RWPE1 (cell line): ENCODE measurements at regions of chr9 and their contacts with region 1.

Region 1: GRCh38 chr9:113410207-113410864 is at the starts of genes C9orf43 and POLE3:
- DNase-seq: peak; percentile 99
- H3K27ac ChIP-seq: peak within 1 kb of the TSS; percentile 95
- CTCF ChIP-seq: no peak

Region 2: DNA sequence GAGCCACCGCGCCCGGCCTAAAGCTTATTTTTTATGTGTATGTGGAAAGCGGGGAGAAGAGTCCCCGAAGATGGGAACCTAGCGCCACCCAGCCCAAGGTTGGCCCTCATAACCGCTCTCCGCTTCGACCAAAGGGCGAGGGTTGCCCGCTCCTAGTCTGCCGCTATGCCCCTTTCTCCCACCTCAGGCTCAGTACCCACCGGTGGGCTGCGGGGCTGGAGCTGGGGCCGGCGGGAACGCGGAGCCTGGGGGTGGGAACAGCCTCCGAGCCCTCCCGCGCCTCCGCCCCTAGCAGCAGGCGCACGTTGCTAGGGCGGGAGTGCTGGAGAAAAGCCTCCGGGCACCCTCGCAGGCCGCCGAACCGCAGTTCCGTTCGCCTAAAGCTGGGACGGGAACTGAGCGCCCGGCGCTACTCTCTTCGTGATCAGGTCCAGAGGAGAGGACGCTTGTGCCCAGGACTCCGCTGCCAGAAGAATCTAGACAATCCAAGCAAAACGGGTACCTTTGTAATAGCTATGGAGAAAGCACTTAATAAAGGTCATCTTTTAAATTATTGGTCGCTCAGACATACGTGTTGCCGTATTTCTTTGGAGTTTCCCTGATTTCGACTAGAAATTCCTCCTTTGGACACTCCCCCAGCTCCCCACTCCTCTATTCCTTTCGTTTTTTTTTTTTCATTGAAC is 70.2 kb before region 1 on chr9 and contains the start of gene WDR31:
- CTCF ChIA-PET with region 1: interaction called, 3 read pairs
- POLR2A ChIA-PET with region 1: interaction called, 11 read pairs
- DNase-seq: peak; percentile 97
- H3K27ac ChIP-seq: peak within 1 kb of the TSS; percentile 75
- CTCF ChIP-seq: no peak

Region 3: DNA sequence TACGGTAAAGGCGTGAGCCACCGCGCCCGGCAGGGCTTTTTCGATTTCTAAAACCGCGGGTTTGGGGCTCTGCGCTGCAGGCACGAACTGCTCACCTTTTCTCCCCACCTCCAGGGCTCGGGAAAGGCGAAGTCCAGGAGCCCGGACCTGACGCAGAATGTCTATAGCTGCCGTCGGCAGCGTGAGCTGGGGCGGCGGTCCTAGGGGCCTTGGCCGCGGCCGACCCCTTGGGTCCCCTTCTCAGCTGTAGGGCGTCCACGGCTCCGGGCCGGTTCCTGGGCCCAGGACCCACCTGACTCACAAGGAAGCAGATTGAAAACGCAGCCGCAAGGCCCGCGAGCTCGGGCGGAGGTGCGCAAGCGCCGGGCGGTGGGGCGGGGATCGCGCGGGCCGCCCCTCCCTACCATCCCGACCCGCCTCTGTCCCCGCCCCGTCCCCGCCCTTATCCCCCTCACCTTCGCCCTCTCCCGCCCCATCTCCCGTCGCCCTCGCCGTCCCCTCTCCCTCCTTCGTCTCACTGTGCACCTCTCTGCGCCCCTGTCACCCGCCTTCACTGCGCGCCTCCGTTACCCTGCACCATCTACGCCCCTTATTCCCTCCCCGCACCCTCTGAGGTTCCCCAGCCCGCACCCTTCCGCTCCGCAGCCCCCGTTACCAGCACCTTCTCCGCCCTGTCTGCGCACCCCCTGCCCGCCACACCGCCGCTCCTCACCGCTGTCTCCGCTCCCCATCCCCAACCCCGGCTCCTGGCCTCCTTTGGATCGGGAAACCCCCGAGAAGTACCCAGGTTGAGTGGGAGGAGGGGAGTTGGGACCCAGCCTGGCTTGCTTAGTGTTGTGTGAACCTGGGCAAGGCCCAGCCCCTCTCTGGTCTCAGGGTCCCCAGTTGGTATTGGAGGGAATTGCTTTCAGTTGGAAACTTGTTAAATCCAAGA is 33.4 kb before region 1 on chr9 and contains the start of gene HDHD3:
- CTCF ChIA-PET with region 1: no interaction called
- POLR2A ChIA-PET with region 1: interaction called, 20 read pairs
- DNase-seq: peak; percentile 97
- H3K27ac ChIP-seq: peak within 1 kb of the TSS; percentile 81
- CTCF ChIP-seq: no peak